Activated CD8-positive, alpha-beta memory T cell treated with anti-CD3 and anti-CD28 coated beads, Interleukin-2, amount 10 ng/mL, durations not matched to agents 7 days and 5 days (primary cell): ENCODE measurements at regions of chr11 and their contacts with region 1.

Region 1: GRCh38 chr11:14907411-14908213 is 15.6 kb upstream of the CYP2R1 start:
- DNase-seq: peak; percentile 89
- ATAC-seq: peak; percentile 58
- H3K4me3 Mint-ChIP-seq: no peak overlapping the region
- H3K27ac Mint-ChIP-seq: peak overlapping the region; percentile 69
- H3K4me1 Mint-ChIP-seq: peaks cover 50% of the 10 kb centered on the region
- H3K27me3 Mint-ChIP-seq: no peaks in the 10 kb centered on the region

Region 2: GRCh38 chr11:14519917-14520746 is 387.5 kb before region 1 on chr11 and contains the start of gene PSMA1:
- CTCF ChIA-PET with region 1: interaction called, 26 read pairs
- DNase-seq: peak; percentile 98
- ATAC-seq: peak; percentile 93
- H3K4me3 Mint-ChIP-seq: peak within 1 kb of the TSS; percentile 90
- H3K27ac Mint-ChIP-seq: peak within 1 kb of the TSS; percentile 95
- H3K4me1 Mint-ChIP-seq: peaks cover 31% of the 10 kb centered on the region
- H3K27me3 Mint-ChIP-seq: no peaks in the 10 kb centered on the region
- total RNA-seq, gene PSMA1: 222 to 268 TPM

Region 3: GRCh38 chr11:14619603-14620531 is 287.7 kb before region 1 on chr11:
- CTCF ChIA-PET with region 1: interaction called, 29 read pairs
- DNase-seq: no peak
- ATAC-seq: no peak
- H3K4me3 Mint-ChIP-seq: no peak overlapping the region
- H3K27ac Mint-ChIP-seq: no peak overlapping the region
- H3K4me1 Mint-ChIP-seq: peaks cover 13% of the 10 kb centered on the region
- H3K27me3 Mint-ChIP-seq: no peaks in the 10 kb centered on the region

Region 4: GRCh38 chr11:14751975-14752407 is 155.6 kb before region 1 on chr11:
- CTCF ChIA-PET with region 1: no interaction called
- DNase-seq: no peak
- ATAC-seq: peak; percentile 57
- H3K4me3 Mint-ChIP-seq: no peak overlapping the region
- H3K27ac Mint-ChIP-seq: no peak overlapping the region
- H3K4me1 Mint-ChIP-seq: peaks cover 39% of the 10 kb centered on the region
- H3K27me3 Mint-ChIP-seq: no peaks in the 10 kb centered on the region

Region 5: GRCh38 chr11:14764579-14765527 is 142.8 kb before region 1 on chr11:
- CTCF ChIA-PET with region 1: interaction called, 15 read pairs
- DNase-seq: peak; percentile 73
- ATAC-seq: peak; percentile 80
- H3K4me3 Mint-ChIP-seq: peak overlapping the region; percentile 50
- H3K27ac Mint-ChIP-seq: no peak overlapping the region
- H3K4me1 Mint-ChIP-seq: peaks cover 46% of the 10 kb centered on the region
- H3K27me3 Mint-ChIP-seq: no peaks in the 10 kb centered on the region

Region 6: DNA sequence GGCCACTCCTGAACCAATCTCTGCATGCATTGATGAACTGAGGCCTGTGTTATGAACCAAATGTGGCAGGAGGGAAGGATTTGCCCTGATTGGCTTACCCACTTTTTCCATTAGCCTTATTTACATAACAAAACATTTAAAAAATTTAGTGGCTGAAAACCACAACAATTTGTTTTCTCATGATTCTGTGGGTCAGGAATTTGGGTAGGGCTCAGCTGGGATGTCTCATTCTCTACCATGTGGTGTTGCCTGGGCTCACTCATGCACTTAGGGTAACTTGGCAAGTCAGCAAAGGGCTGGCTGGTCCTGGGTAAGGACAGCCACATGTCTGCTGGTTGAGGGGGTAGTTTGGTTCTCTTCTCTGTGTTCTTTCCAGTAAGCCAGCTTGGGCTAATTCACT is 19.5 kb after region 1 on chr11:
- CTCF ChIA-PET with region 1: interaction called, 36 read pairs
- DNase-seq: no peak
- ATAC-seq: no peak
- H3K4me3 Mint-ChIP-seq: no peak overlapping the region
- H3K27ac Mint-ChIP-seq: no peak overlapping the region
- H3K4me1 Mint-ChIP-seq: no peaks in the 10 kb centered on the region
- H3K27me3 Mint-ChIP-seq: no peaks in the 10 kb centered on the region

Region 7: DNA sequence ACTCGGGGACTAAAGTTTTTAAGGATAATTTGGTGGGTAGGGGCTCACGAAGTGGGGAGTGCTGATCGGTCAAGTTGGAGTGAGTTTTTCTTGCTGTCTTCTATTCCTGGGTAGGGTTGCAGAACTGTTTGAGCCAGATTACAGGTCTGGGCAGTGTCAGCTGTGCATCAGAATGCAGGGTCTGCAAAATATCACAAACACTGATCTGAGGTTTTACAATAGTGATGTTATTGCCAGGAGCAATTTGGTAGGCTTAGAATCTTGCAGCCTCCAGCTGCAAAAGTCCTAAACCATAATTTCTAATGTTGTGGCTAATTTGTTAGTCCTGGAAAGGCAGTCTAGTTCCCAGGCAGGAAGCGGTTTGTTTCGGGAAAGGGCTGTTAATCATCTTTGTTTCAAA is 104.2 kb after region 1 on chr11:
- CTCF ChIA-PET with region 1: interaction called, 94 read pairs
- DNase-seq: no peak
- ATAC-seq: no peak
- H3K4me3 Mint-ChIP-seq: no peak overlapping the region
- H3K27ac Mint-ChIP-seq: no peak overlapping the region
- H3K4me1 Mint-ChIP-seq: no peaks in the 10 kb centered on the region
- H3K27me3 Mint-ChIP-seq: peaks cover 45% of the 10 kb centered on the region

Region 8: GRCh38 chr11:15101072-15101709 is 193.6 kb after region 1 on chr11:
- CTCF ChIA-PET with region 1: interaction called, 26 read pairs
- DNase-seq: peak; percentile 71
- ATAC-seq: peak; percentile 80
- H3K4me3 Mint-ChIP-seq: no peak overlapping the region
- H3K27ac Mint-ChIP-seq: no peak overlapping the region
- H3K4me1 Mint-ChIP-seq: peaks cover 6% of the 10 kb centered on the region
- H3K27me3 Mint-ChIP-seq: peaks cover 29% of the 10 kb centered on the region